Activated T-helper 1 cell treated with anti-CD3 and anti-CD28 coated beads, Interleukin-12 subunit alpha, Interleukin-12 subunit beta, Interleukin-2, Interleukin-4 antibody, amounts not matched to agents 30 ng/mL and 10 ng/mL and 1 ng/mL, durations not matched to agents 14 hours and 24 hours and 36 hours (primary cell): ENCODE measurements at regions of chr1 and their contacts with region 1.

Region 1: GRCh38 chr1:26145041-26145959 is 13.6 kb upstream of the FAM110D start:
- DNase-seq: peak; percentile 66
- H3K4me3 Mint-ChIP-seq: no peak overlapping the region
- H3K27ac Mint-ChIP-seq: no peak overlapping the region
- H3K4me1 Mint-ChIP-seq: peaks cover 8% of the 10 kb centered on the region
- H3K27me3 Mint-ChIP-seq: peaks cover 24% of the 10 kb centered on the region

Region 2: DNA sequence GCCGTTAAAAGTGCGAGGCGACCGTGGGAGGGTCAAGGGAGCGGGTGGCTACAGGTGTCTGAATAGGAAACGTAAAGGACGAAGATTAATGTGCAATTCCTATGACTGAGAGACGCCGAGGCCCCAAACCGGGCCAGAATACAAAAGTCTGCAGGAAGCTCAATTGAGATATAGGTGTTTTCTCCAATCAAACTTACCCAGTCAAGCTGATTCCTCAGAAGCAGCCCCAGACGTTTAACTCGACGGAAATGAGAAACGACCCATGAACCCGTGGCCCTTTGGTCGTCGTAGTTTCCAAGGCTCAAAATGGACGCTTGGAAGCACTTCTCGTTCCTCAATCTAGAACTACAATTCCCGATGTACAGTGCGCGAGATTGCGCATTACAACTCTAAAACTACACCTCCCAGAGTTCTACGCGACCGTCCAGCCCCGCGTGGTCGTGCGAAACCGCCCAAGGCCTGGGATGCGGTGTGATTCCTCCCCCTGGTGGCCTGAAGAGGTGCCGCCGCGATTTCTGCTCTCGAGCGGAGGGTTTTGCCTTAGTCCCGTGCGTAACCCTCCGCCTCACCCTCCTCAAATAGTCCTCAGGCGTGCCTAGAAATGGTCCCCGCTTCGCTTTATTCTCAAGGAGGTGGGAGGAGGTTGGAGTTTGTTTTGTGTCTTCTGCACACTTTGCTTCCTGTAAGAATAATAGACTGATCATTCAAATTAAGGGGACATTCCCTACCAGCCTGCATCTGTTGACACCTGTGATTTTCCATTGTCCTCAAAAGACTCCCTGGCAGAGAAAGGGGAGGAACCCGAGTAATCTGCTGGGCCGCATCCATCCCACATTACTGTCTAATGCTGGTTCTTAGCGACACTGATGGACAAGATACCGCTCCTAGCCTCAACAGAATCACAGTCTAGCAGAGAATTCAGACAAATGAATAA is 147.2 kb before region 1 on chr1 and contains the start of gene PAFAH2:
- intact Hi-C with region 1: no loop called
- DNase-seq: peak; percentile 96
- H3K4me3 Mint-ChIP-seq: peak within 1 kb of the TSS; percentile 98
- H3K27ac Mint-ChIP-seq: peak within 1 kb of the TSS; percentile 98
- H3K4me1 Mint-ChIP-seq: peaks cover 18% of the 10 kb centered on the region
- H3K27me3 Mint-ChIP-seq: no peaks in the 10 kb centered on the region
- total RNA-seq, gene PAFAH2: 8.0 and 9.0 TPM in 2 replicates

Region 3: DNA sequence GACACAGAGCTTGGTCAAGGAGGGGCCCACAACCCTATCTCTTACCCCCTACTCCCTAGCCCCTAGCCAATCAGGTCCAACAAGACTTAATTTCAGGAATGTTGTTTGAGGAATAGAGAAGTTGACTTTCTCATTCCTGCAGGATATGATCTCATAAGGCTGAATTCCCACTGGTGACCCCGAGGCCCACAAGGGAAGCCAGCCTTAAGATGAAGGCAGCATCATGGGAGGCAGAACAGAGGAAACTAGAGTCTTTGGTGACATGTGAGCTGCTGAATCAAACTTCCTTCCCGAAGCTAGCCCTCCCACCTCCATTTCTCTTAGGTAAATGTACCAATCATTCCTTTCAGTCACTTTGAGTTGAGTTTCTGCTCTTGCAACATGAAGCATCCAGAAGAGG is 42.8 kb before region 1 on chr1:
- intact Hi-C with region 1: loop called (anchors 1 kb)
- DNase-seq: no peak
- H3K4me3 Mint-ChIP-seq: no peak overlapping the region
- H3K27ac Mint-ChIP-seq: no peak overlapping the region
- H3K4me1 Mint-ChIP-seq: peaks cover 14% of the 10 kb centered on the region
- H3K27me3 Mint-ChIP-seq: peaks cover 9% of the 10 kb centered on the region

Region 4: DNA sequence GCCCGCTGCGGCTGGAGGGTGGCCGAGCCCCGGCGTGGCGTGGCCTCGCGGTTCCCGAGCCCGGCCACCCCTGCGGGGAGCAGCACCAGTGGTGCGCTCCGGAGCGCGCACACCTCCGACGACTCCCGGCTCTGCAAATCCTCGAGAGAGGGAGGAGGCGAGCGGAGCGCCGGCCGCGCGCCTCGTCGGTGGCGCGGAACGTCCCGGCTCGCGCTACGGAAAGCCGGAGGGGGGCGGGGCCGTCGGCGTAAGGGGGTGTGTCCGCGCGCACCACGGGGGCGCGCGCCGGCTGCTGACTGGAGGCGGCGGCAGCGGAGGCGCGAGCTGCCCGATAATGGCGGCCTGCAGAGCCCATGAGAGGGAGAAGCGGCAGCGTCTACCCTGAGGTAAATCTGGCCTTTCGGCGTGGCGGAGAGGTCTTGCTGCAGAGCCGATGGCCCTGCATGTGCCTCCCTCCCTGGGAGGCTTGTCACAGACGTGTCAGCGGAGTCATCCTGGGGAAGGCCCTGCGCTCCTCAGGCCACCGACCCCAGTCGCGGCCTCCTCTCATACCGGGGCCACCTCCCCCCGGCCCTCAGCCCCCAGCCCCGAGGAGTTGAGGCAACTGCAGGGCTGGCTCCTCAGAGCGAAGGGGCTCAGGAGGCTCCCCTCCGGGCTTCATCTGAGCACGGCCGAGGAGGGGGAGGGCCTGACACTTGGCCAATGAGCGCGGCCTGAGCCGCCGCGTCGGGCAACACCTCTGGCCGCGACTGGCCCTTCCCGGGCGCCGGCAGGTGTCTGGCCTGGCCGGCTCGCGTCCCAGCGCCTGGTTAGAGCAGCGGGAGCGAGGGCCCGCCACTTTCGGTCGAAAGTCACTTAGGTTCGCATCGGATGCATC is 33.5 kb before region 1 on chr1 and contains the start of gene PDIK1L:
- intact Hi-C with region 1: loop called (anchors 1 kb)
- DNase-seq: peak; percentile 91
- H3K4me3 Mint-ChIP-seq: peak within 1 kb of the TSS; percentile 96
- H3K27ac Mint-ChIP-seq: peak within 1 kb of the TSS; percentile 92
- H3K4me1 Mint-ChIP-seq: peaks cover 36% of the 10 kb centered on the region
- H3K27me3 Mint-ChIP-seq: no peaks in the 10 kb centered on the region
- total RNA-seq, gene PDIK1L: 15.5 and 18.9 TPM in 2 replicates

Region 5: GRCh38 chr1:26126321-26127084 is 18.8 kb before region 1 on chr1:
- intact Hi-C with region 1: loop called (anchors 1 kb)
- DNase-seq: peak; percentile 66
- H3K4me3 Mint-ChIP-seq: peak overlapping the region; percentile 64
- H3K27ac Mint-ChIP-seq: peak overlapping the region; percentile 89
- H3K4me1 Mint-ChIP-seq: peaks cover 62% of the 10 kb centered on the region
- H3K27me3 Mint-ChIP-seq: no peaks in the 10 kb centered on the region